ENCODE measurements at regions of chr4 and their contacts with region 1.

Region 1: GRCh38 chr4:1693129-1693896 is 9.2 kb upstream of the FAM53A start:
- DNase-seq: peak; percentile 72
- ATAC-seq: peak; percentile 94
- H3K4me3 ChIP-seq: no peak overlapping the region
- H3K27ac ChIP-seq: no peak overlapping the region
- H3K4me1 ChIP-seq: no peaks in the 10 kb centered on the region
- H3K27me3 ChIP-seq: no peaks in the 10 kb centered on the region
- CTCF ChIP-seq: peak; percentile 83
- POLR2A ChIP-seq: no peak
- RAD21 ChIP-seq: peak; percentile 68

Region 2: GRCh38 chr4:1419708-1420107 is 273.6 kb before region 1 on chr4:
- CTCF ChIA-PET with region 1: no interaction called
- POLR2A ChIA-PET with region 1: no interaction called
- dilution Hi-C with region 1: no loop called
- in situ Hi-C with region 1: no loop called
- intact Hi-C with region 1: no loop called
- DNase-seq: no peak
- ATAC-seq: no peak
- H3K4me3 ChIP-seq: no peak overlapping the region
- H3K27ac ChIP-seq: no peak overlapping the region
- H3K4me1 ChIP-seq: no peaks in the 10 kb centered on the region
- H3K27me3 ChIP-seq: peaks cover 33% of the 10 kb centered on the region
- CTCF ChIP-seq: no peak
- POLR2A ChIP-seq: no peak
- RAD21 ChIP-seq: no peak

Region 3: DNA sequence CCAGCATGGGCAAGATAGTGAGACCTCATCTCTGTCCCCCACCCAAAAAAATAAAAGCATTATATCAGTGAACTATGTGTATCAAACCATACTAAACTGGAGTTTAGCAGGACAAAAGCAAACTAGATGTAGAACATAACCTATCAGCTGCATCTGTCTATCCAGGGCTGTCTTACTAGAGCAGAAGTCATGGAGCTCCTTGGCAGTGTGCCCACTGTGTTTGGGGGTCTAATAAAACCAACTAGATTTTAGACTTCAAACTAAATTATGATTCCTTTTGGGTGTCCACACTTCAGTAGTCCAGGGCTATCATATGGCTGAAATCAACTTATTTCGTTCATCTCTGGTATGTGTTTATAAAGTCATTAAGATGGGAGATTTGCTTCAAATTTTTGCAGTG is 10.6 kb after region 1 on chr4:
- CTCF ChIA-PET with region 1: interaction called, 22 read pairs
- POLR2A ChIA-PET with region 1: no interaction called
- dilution Hi-C with region 1: no loop called
- in situ Hi-C with region 1: no loop called
- intact Hi-C with region 1: no loop called
- DNase-seq: no peak
- ATAC-seq: no peak
- H3K4me3 ChIP-seq: no peak overlapping the region
- H3K27ac ChIP-seq: no peak overlapping the region
- H3K4me1 ChIP-seq: peaks cover 2% of the 10 kb centered on the region; the same call in 1 of the 2 replicates
- H3K27me3 ChIP-seq: no peaks in the 10 kb centered on the region
- CTCF ChIP-seq: no peak
- POLR2A ChIP-seq: no peak
- RAD21 ChIP-seq: no peak

Region 4: DNA sequence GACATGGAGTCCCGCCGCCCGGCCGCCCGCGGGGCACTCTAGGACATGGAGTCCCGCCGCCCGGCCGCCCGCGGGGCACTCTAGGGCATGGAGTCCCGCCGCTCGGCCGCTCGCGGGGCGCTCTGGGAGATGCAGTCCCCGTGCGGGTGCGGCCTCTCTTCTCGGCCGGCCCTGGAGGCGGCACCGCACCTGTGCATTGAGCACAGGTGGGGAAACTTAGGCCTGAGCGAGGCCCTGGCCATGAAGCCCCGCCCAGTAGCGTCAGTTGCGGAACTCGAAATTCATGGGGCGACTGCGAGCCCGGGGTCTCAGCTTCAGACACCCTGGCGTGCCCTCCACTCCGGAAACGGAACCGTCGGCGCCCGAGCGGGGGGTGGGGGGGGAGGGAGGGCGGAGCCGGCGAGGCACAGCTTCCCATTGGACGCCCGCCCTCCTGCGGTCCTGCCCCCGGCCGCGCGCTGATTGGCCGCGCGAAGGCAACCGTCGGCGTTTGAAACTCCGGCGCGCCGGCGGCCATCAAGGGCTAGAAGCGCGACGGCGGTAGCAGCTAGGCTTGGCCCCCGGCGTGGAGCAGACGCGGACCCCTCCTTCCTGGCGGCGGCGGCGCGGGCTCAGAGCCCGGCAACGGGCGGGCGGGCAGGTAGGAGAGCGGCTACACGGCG is 27.8 kb after region 1 on chr4 and contains the starts of genes TACC3 and TMEM129:
- CTCF ChIA-PET with region 1: interaction called, 13 read pairs
- POLR2A ChIA-PET with region 1: interaction called, 4 read pairs
- dilution Hi-C with region 1: no loop called
- in situ Hi-C with region 1: no loop called
- intact Hi-C with region 1: loop called (anchors 1 kb)
- DNase-seq: peak; percentile 87
- ATAC-seq: peak; percentile 87
- H3K4me3 ChIP-seq: peak within 1 kb of the TSS; percentile 86
- H3K27ac ChIP-seq: peak within 1 kb of the TSS; percentile 88
- H3K4me1 ChIP-seq: peaks cover 15% of the 10 kb centered on the region
- H3K27me3 ChIP-seq: no peaks in the 10 kb centered on the region
- CTCF ChIP-seq: no peak
- POLR2A ChIP-seq: 0 out of 2 replicates have a peak, but pooled peaks have one; percentile 20
- RAD21 ChIP-seq: no peak
- total RNA-seq, gene TACC3: 15.0 and 15.1 TPM in 2 replicates
- total RNA-seq, gene TMEM129: 6.6 and 6.7 TPM in 2 replicates

Region 5: GRCh38 chr4:1726146-1726934 is 33.0 kb after region 1 on chr4:
- CTCF ChIA-PET with region 1: interaction called, 13 read pairs
- POLR2A ChIA-PET with region 1: no interaction called
- dilution Hi-C with region 1: no loop called
- in situ Hi-C with region 1: no loop called
- intact Hi-C with region 1: loop called (anchors 1 kb)
- DNase-seq: peak; percentile 78
- ATAC-seq: peak; percentile 76
- H3K4me3 ChIP-seq: no peak overlapping the region
- H3K27ac ChIP-seq: no peak overlapping the region
- H3K4me1 ChIP-seq: peaks cover 19% of the 10 kb centered on the region
- H3K27me3 ChIP-seq: no peaks in the 10 kb centered on the region
- CTCF ChIP-seq: peak; percentile 86
- POLR2A ChIP-seq: no peak
- RAD21 ChIP-seq: peak; percentile 72